ENCODE measurements at regions of chr1 and their contacts with region 1.

Region 1: DNA sequence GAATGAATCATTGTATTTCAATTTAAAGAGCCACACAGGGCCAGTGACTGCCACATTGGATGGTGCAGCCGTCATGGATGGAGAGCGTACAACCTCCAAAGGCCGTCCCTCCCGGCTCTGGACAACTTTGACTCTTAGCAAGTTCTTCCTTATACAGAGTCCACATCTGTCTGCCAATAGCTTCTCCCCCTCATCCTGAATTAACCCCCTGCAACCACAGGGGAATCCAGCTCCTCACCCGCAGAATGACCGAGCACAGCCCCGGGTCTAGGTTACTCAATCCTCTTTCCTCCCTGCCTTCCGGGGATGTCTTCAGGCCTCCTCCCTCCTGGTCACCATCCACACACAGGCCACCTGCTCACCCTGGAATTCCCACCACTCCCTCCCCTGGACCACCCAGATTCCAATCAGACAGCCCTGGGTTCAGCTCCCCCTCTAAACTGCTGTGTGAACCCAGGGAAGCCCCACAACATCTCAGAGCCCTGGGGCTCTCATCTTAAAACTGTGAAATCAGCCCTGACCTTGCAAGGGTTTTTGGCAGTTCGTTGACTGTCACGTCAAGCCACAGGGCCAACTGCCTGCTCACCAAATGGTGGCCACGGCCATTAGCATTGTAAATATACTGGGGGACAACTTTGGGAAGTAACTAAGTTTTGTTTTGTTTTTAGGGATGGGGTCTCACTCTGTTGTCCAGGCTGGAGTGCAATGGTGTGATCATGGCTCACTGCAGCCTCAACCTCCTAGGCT is 54.3 kb downstream of the HSPG2 start:
- DNase-seq: no peak
- ATAC-seq: no peak
- H3K4me3 Mint-ChIP-seq: no peak overlapping the region
- H3K27ac Mint-ChIP-seq: no peak overlapping the region
- H3K4me1 Mint-ChIP-seq: no peaks in the 10 kb centered on the region
- H3K27me3 Mint-ChIP-seq: no peaks in the 10 kb centered on the region
- CTCF ChIP-seq: no peak

Region 2: GRCh38 chr1:21764615-21765423 is 118.0 kb before region 1 on chr1:
- CTCF ChIA-PET with region 1: no interaction called
- POLR2A ChIA-PET with region 1: no interaction called
- DNase-seq: no peak
- ATAC-seq: peak; percentile 83
- H3K4me3 Mint-ChIP-seq: no peak overlapping the region
- H3K27ac Mint-ChIP-seq: peak overlapping the region; percentile 43; the same call in 1 of the 2 replicates
- H3K4me1 Mint-ChIP-seq: peaks cover 44% of the 10 kb centered on the region
- H3K27me3 Mint-ChIP-seq: no peaks in the 10 kb centered on the region
- CTCF ChIP-seq: no peak

Region 3: GRCh38 chr1:21865943-21866706 is 16.7 kb before region 1 on chr1:
- CTCF ChIA-PET with region 1: interaction called, 13 read pairs
- POLR2A ChIA-PET with region 1: no interaction called
- DNase-seq: peak; percentile 65
- ATAC-seq: peak; percentile 84
- H3K4me3 Mint-ChIP-seq: no peak overlapping the region
- H3K27ac Mint-ChIP-seq: peak overlapping the region; percentile 92
- H3K4me1 Mint-ChIP-seq: peaks cover 23% of the 10 kb centered on the region
- H3K27me3 Mint-ChIP-seq: no peaks in the 10 kb centered on the region
- CTCF ChIP-seq: no peak; the same call in 1 of the 2 replicates

Region 4: DNA sequence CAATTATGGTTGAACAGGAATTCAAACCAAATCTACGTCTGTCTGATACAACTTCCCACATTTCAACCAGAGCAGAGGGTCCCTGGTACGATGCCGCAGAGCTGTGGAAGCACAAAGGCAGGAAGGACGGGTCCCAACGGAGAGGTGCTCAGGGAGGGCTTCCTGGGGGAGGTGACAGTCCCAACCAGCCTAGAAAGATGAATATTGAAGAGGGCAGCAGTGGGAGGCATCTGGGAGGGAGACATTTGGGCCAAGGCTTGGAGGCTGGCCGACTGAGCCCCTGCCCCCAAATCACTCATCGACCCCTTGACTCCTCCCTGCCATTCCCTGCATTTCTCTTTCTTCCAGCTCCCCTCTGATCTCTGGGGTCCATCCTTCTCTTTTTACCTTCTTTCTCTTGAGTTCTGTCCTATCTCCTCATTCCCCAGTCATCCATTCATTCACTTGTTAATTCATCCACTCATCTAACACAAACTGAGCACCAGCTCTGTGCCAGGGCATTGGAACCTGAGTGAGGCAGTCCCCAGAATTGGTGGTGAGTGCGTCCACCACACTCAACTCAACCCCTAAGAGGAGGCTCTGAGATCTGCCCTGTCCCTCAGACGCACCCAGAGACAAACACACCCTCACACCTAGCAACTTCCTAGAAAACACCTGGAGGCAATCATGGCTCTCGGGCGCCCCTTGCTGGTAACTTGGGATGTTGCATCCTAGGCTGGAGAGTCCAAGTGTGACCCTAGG is 80.8 kb after region 1 on chr1:
- CTCF ChIA-PET with region 1: interaction called, 11 read pairs
- POLR2A ChIA-PET with region 1: no interaction called
- DNase-seq: peak; percentile 91
- ATAC-seq: peak; percentile 94
- H3K4me3 Mint-ChIP-seq: peak overlapping the region; percentile 5; the same call in 1 of the 2 replicates
- H3K27ac Mint-ChIP-seq: peak overlapping the region; percentile 52
- H3K4me1 Mint-ChIP-seq: peaks cover 12% of the 10 kb centered on the region
- H3K27me3 Mint-ChIP-seq: no peaks in the 10 kb centered on the region
- CTCF ChIP-seq: peak; percentile 94

Measured in WTC11 (cell line).